ENCODE measurements at regions of chr12 and their contacts with region 1.

Region 1: DNA sequence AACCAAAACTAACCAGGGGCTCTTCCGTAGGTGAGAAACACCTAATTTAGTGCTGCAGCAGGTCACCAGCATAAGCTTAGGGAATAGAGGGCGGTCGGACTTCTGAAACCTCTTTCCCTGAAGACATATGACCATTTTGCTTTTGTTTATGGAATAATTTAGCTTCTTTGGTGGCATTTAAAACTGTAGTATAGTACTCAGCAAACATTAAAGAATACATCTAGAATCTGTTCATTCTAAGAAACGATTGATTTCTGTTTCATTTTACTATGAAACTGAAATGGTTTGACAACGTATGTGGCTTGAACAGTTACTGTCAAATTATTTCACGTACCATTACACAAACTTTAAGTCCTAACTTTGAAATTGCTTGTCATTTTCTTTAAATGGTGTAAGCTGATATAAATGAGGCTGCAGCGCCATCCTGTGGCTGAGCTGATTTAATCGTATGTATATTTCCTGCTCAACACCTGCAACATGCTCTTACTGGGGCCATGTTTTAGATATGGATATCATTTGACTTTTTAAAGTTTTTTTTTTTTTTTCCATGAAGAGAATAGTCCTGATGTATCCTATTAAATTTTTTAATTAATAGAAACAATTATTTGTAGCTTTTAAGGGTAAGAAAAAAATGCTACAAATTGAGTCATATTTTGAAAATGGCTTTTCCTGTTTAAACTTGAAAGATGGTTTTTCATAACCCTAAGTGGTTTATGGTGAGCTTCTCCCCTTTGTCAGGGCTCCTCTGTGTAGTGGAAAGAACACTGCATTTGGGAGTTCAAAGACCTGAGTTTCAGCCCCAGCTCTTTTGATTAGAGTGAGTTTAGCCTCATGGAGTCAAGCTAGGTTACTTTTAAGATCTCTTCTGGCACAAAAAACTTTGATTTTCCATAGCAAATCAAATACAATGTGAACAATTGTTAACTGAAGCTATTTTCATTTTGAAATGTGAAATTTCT is 27.4 kb downstream of the CFAP54 start:
- DNase-seq: peak; percentile 96
- H3K4me3 Mint-ChIP-seq: peak overlapping the region; percentile 2
- H3K27ac Mint-ChIP-seq: peak overlapping the region; percentile 25
- H3K4me1 Mint-ChIP-seq: peaks cover 16% of the 10 kb centered on the region
- H3K27me3 Mint-ChIP-seq: no peaks in the 10 kb centered on the region

Region 2: GRCh38 chr12:96061864-96062453 is 454.8 kb before region 1 on chr12:
- CTCF ChIA-PET with region 1: interaction called, 20 read pairs
- intact Hi-C with region 1: loop called (anchors 1 kb)
- DNase-seq: peak; percentile 90
- H3K4me3 Mint-ChIP-seq: no peak overlapping the region
- H3K27ac Mint-ChIP-seq: no peak overlapping the region
- H3K4me1 Mint-ChIP-seq: peaks cover 25% of the 10 kb centered on the region
- H3K27me3 Mint-ChIP-seq: no peaks in the 10 kb centered on the region

Region 3: GRCh38 chr12:96237465-96238077 is 279.2 kb before region 1 on chr12:
- CTCF ChIA-PET with region 1: interaction called, 3 read pairs
- intact Hi-C with region 1: loop called (anchors 2 kb)
- DNase-seq: peak; percentile 75
- H3K4me3 Mint-ChIP-seq: no peak overlapping the region
- H3K27ac Mint-ChIP-seq: peak overlapping the region; percentile 47
- H3K4me1 Mint-ChIP-seq: peaks cover 66% of the 10 kb centered on the region
- H3K27me3 Mint-ChIP-seq: no peaks in the 10 kb centered on the region

Region 4: GRCh38 chr12:96501139-96501761 is 15.5 kb before region 1 on chr12:
- CTCF ChIA-PET with region 1: interaction called, 25 read pairs
- intact Hi-C with region 1: loop called (anchors 1 kb)
- DNase-seq: peak; percentile 44
- H3K4me3 Mint-ChIP-seq: no peak overlapping the region
- H3K27ac Mint-ChIP-seq: peak overlapping the region; percentile 74
- H3K4me1 Mint-ChIP-seq: peaks cover 31% of the 10 kb centered on the region
- H3K27me3 Mint-ChIP-seq: no peaks in the 10 kb centered on the region

Region 5: DNA sequence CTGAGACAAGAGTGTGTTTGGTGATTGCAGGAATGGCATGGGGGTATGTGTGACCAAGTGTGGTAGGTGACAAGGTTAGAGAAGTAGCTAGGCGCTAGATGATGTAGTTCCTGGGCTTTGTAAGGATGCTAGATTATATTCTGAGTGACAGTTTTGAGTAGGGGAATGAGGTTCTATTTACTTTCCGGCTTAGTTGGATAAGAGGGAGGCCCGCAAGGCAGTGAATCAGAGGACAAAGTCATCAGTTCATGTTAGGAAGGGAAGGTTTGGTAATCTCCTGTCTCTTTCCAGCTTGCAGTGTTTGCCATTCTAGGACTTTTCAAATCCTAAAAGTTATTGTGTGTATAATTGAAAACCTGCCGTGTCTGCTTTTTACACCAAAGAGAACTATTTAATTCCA is 17.6 kb after region 1 on chr12:
- CTCF ChIA-PET with region 1: no interaction called
- intact Hi-C with region 1: no loop called
- DNase-seq: no peak
- H3K4me3 Mint-ChIP-seq: no peak overlapping the region
- H3K27ac Mint-ChIP-seq: no peak overlapping the region
- H3K4me1 Mint-ChIP-seq: no peaks in the 10 kb centered on the region
- H3K27me3 Mint-ChIP-seq: no peaks in the 10 kb centered on the region

Region 6: GRCh38 chr12:96587691-96588090 is 70.9 kb after region 1 on chr12:
- CTCF ChIA-PET with region 1: no interaction called
- intact Hi-C with region 1: no loop called
- DNase-seq: no peak
- H3K4me3 Mint-ChIP-seq: no peak overlapping the region
- H3K27ac Mint-ChIP-seq: no peak overlapping the region
- H3K4me1 Mint-ChIP-seq: no peaks in the 10 kb centered on the region
- H3K27me3 Mint-ChIP-seq: no peaks in the 10 kb centered on the region